Activated B cell treated with CpG ODN at 0.5 μM for 24 hours (primary cell): ENCODE measurements at regions of chr4 and their contacts with region 1.

Region 1: GRCh38 chr4:123444290-123444731 is 47.7 kb downstream of the SPRY1 start:
- DNase-seq: peak; percentile 23
- ATAC-seq: peak; percentile 77
- H3K4me3 Mint-ChIP-seq: peak overlapping the region; percentile 66
- H3K27ac Mint-ChIP-seq: peak overlapping the region; percentile 82
- H3K4me1 Mint-ChIP-seq: peaks cover 43% of the 10 kb centered on the region
- H3K27me3 Mint-ChIP-seq: no peaks in the 10 kb centered on the region
- CTCF ChIP-seq: no peak

Region 2: DNA sequence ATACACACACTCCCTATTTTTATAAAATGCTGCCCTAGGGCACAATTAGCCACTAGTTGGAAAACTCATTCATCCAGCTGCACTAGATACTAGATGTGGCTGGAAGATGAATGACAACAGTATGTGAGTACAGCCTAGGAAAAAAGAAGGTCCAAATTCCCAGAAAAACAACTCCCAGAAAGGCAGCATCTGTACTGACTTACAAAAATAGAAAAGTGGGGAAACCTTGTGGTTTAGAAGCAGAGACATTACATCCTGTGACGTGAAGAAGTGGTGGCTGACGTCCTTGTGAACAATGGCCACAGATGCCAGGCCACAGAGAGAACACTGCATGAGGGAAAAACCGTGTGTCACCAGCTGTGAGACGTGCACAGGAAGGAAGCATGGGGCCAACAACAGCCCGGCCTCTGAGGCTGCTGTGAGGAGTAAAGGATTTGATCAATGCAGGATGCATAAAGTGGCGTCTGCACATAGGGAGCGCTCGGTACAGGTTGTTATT is 33.4 kb after region 1 on chr4:
- CTCF ChIA-PET with region 1: no interaction called
- POLR2A ChIA-PET with region 1: no interaction called
- intact Hi-C with region 1: loop called (anchors 5 kb)
- DNase-seq: no peak
- ATAC-seq: peak; percentile 56
- H3K4me3 Mint-ChIP-seq: no peak overlapping the region
- H3K27ac Mint-ChIP-seq: no peak overlapping the region
- H3K4me1 Mint-ChIP-seq: peaks cover 20% of the 10 kb centered on the region
- H3K27me3 Mint-ChIP-seq: no peaks in the 10 kb centered on the region
- CTCF ChIP-seq: no peak

Region 3: DNA sequence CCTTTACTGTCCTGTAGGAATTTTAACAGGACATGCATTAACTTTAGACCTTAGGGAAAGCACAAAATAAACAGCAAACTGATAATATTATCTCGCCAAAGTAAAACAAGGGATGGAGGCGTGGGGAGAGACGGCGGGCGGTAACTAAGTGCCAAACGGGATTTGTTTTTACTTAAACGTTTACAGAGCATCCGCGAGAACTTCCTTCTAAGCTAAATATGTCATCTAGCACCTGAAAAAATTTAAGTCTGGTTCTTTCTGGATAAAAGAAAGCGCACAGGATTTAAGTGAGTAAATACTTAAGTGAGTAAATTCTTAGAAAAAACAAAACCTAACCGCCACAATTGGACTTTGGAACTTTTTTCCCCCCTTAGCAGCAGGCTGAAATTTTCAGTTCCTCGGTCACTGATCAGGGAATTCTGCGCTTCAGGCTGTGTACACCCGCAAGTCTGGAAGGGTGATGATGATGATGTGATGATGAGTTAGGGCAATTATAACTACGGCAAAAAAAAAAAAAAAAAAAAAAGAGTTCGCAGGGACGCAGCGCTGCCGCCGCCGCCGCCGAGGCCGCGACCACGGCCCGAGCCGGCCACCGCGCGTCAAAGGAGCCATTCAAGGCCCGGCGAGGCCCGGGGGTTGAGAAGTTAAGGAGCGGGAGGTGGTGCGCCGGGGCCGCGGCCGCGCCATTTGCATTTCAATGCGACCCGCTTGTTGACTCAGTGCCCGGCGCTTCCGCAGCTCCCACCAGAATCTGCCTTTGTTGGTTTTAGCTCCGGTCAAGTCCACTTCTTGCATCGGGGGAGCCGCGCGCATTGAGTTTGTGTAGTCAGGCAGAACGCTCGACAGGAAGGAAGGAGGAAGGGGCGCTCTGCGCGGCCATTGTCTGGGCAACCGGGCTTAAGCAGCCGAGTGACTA is 61.0 kb after region 1 on chr4:
- CTCF ChIA-PET with region 1: no interaction called
- POLR2A ChIA-PET with region 1: interaction called, 9 read pairs
- intact Hi-C with region 1: loop called (anchors 2 kb)
- DNase-seq: peak; percentile 22
- ATAC-seq: peak; percentile 40
- H3K4me3 Mint-ChIP-seq: peak overlapping the region; percentile 91
- H3K27ac Mint-ChIP-seq: peak overlapping the region; percentile 68
- H3K4me1 Mint-ChIP-seq: peaks cover 26% of the 10 kb centered on the region
- H3K27me3 Mint-ChIP-seq: peaks cover 13% of the 10 kb centered on the region
- CTCF ChIP-seq: no peak